ENCODE measurements at regions of chr13 and their contacts with region 1.

Region 1: DNA sequence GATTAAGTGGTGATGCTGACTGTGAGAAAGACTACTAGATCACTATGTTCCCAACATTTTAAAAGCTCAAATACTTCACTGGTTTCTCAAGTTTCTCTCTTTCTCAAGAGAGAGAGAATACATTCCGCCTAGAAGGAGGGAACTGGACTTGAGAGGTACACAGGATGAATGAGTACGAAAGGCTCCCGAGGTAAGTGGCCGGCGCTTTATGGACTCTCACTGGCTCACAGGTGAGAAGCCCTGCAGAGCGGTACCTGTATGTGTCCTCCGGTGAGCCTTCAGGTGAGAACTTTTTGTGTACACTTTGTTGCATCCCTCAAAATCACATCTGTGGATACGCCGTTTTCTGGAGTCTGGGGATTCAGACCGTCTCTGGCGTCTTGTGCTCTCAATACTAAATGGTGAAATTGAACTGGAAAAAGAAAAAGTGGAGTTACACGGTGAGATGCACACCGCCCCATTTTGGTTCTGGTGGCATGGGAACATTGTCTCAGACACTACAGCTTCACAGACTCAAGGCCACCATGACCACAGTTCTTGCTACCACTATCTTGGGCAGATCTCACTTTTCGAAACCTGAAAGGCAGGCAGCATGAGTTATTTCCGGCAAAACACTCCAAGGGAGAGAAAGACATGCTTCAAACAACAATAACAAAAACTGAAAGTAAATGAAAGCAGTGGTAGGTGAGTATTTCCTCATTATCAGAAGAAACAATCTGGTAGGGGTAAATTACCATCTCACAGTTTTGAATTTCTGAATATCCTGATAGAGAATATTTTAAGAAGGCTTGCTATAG is 418.9 kb downstream of the KLF12 start:
- DNase-seq: peak; percentile 68
- ATAC-seq: peak; percentile 85
- H3K4me3 Mint-ChIP-seq: peak overlapping the region; percentile 50
- H3K27ac Mint-ChIP-seq: peak overlapping the region; percentile 83
- H3K4me1 Mint-ChIP-seq: peaks cover 53% of the 10 kb centered on the region
- H3K27me3 Mint-ChIP-seq: no peaks in the 10 kb centered on the region

Region 2: DNA sequence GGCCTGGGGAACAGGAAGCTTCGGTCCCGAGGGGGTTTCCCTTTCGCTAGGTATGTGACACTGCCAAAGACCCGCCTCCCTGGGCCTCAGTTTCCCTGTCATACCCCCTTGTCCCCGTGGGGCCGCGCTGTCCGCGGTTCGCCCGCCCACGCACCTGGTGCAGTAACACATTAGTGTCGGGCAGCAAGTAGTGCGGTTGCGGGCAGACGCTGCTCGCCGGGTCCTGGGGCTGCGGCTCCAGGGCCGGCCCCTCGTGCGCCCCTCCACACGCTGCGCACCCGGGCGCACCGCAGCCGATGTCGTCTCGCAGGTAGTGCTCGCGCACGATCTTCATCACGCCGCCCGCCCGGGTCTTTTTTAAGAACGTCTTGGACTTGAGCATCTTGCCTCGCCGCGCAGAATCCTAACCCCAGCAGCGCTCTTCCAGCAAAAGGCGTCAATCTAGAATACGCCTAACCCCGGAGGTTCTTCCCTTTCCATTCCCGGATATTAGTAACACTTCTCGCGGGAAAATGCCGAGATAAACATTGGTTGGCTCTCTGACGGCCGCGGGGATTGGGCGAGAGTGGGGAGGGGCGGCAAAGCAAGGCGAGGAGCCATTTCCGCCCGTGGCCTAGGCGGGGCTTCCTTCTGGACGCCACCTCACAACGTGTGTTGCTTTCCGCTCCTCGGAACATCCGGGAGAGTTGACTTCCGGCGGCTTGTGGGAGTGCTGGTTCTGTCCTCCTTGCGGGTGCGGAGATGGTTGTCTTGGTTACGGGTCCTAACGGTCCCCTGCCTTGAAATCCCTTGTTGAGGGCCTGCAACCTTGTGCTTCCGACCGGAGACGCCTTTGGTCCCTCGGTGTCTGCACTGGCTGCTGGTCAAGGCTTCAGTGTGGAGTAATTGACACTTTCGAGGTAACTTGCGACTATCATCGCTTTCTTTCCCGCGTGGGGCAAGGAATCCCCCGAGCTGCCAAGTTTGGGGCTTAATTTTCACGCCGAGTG is 933.6 kb before region 1 on chr13 and contains the starts of genes DIS3 and PIBF1:
- CTCF ChIA-PET with region 1: no interaction called
- POLR2A ChIA-PET with region 1: no interaction called
- intact Hi-C with region 1: loop called in 1 of 2 experiments (anchors 10 kb)
- DNase-seq: peak; percentile 98
- ATAC-seq: peak; percentile 98
- H3K4me3 Mint-ChIP-seq: peak within 1 kb of the TSS; percentile 94
- H3K27ac Mint-ChIP-seq: peak within 1 kb of the TSS; percentile 97
- H3K4me1 Mint-ChIP-seq: peaks cover 55% of the 10 kb centered on the region
- H3K27me3 Mint-ChIP-seq: no peaks in the 10 kb centered on the region
- total RNA-seq, gene DIS3: 55.0 to 63.5 TPM
- total RNA-seq, gene PIBF1: 25.7 to 25.9 TPM

Region 3: GRCh38 chr13:73421310-73421912 is 293.9 kb before region 1 on chr13:
- CTCF ChIA-PET with region 1: no interaction called
- POLR2A ChIA-PET with region 1: no interaction called
- intact Hi-C with region 1: loop called (anchors 2 to 5 kb)
- DNase-seq: peak; percentile 52
- ATAC-seq: peak; percentile 94
- H3K4me3 Mint-ChIP-seq: no peak overlapping the region
- H3K27ac Mint-ChIP-seq: no peak overlapping the region
- H3K4me1 Mint-ChIP-seq: peaks cover 5% of the 10 kb centered on the region
- H3K27me3 Mint-ChIP-seq: no peaks in the 10 kb centered on the region

Region 4: DNA sequence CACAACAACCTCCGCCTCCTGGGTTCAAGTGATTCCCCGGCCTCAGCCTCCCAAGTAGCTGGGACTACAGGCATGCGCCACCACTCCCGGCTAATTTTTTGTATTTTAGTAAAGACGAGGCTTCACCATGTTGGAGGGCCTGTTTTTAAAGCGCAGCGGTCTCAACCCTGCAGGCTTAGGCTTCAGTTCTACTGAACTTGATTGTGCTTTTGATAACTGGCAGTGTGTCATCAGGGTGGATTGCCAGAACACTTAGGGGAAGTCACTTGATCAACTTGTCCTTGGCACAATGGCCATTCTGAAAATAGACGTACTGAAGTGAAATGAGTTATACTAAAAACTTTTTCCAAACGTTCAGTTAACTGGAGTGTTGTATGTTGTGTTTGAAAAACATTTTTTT is 184.3 kb before region 1 on chr13:
- CTCF ChIA-PET with region 1: no interaction called
- POLR2A ChIA-PET with region 1: no interaction called
- intact Hi-C with region 1: no loop called
- DNase-seq: no peak
- ATAC-seq: no peak
- H3K4me3 Mint-ChIP-seq: no peak overlapping the region
- H3K27ac Mint-ChIP-seq: no peak overlapping the region
- H3K4me1 Mint-ChIP-seq: no peaks in the 10 kb centered on the region
- H3K27me3 Mint-ChIP-seq: no peaks in the 10 kb centered on the region

Region 5: GRCh38 chr13:73934215-73934623 is 218.9 kb after region 1 on chr13:
- CTCF ChIA-PET with region 1: no interaction called
- POLR2A ChIA-PET with region 1: no interaction called
- intact Hi-C with region 1: loop called in 1 of 2 experiments (anchors 5 kb)
- DNase-seq: no peak
- ATAC-seq: peak; percentile 14
- H3K4me3 Mint-ChIP-seq: no peak overlapping the region
- H3K27ac Mint-ChIP-seq: no peak overlapping the region
- H3K4me1 Mint-ChIP-seq: peaks cover 55% of the 10 kb centered on the region
- H3K27me3 Mint-ChIP-seq: no peaks in the 10 kb centered on the region

Region 6: GRCh38 chr13:74243637-74244526 is 528.6 kb after region 1 on chr13:
- CTCF ChIA-PET with region 1: no interaction called
- POLR2A ChIA-PET with region 1: no interaction called
- intact Hi-C with region 1: loop called (anchors 5 kb)
- DNase-seq: peak; percentile 20
- ATAC-seq: peak; percentile 81
- H3K4me3 Mint-ChIP-seq: peak overlapping the region; percentile 27
- H3K27ac Mint-ChIP-seq: peak overlapping the region; percentile 76
- H3K4me1 Mint-ChIP-seq: peaks cover 71% of the 10 kb centered on the region
- H3K27me3 Mint-ChIP-seq: no peaks in the 10 kb centered on the region

Measured in activated CD4-positive, alpha-beta T cell treated with anti-CD3 and anti-CD28 coated beads for 36 hours (primary cell).